PC-9 (cell line): ENCODE measurements at regions of chr11 and their contacts with region 1.

Region 1: DNA sequence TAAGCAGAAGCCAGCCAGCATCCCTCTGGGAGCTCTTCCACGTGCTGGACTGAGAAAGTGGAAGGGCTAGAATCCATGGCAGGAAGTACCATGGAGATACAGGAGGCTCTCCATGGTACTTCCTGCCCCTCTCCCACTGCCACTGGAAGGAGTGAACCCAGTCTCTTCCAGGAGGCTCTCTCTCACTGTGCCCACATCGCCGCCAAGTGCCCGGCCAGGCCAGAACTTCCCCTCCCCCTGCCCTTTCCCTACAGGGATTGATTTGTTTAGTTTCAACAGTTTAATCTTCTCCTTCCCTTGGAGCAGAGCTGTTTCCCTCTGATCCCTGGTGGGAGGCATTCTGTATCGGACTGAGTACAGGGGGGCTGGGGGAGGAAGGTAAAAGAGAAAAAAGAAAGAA is 133.6 kb downstream of the DSCAML1 start:
- DNase-seq: no peak
- H3K4me3 ChIP-seq: no peak overlapping the region
- H3K27ac ChIP-seq: no peak overlapping the region
- H3K4me1 ChIP-seq: no peaks in the 10 kb centered on the region
- H3K27me3 ChIP-seq: peaks cover 100% of the 10 kb centered on the region
- CTCF ChIP-seq: no peak

Region 2: DNA sequence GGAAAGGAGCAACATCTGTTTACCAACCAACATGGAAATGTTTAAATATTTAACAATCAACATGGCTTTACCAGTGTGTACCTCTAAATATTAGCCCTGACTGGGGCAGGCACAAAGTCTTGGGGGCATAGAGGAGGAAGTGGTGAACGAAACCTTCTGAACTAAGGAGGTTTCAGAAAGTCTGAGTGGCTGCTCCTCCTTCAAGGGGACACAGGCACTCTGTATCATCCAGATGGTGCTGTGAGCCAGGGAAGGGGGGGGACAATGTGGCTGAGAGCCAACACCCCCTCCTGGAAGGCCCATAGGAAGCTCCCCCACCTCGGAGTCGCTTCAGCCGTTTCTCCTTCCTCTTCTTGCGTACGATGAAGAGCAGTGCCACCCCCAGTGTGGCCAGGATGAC is 228.1 kb before region 1 on chr11:
- CTCF ChIA-PET with region 1: no interaction called
- POLR2A ChIA-PET with region 1: interaction called, 12 read pairs
- intact Hi-C with region 1: no loop called
- DNase-seq: no peak
- H3K4me3 ChIP-seq: no peak overlapping the region
- H3K27ac ChIP-seq: no peak overlapping the region
- H3K4me1 ChIP-seq: no peaks in the 10 kb centered on the region
- H3K27me3 ChIP-seq: peaks cover 98% of the 10 kb centered on the region
- CTCF ChIP-seq: no peak